Mammary epithelial cell (primary cell): ENCODE measurements at regions of chr6 and their contacts with region 1.

Region 1: DNA sequence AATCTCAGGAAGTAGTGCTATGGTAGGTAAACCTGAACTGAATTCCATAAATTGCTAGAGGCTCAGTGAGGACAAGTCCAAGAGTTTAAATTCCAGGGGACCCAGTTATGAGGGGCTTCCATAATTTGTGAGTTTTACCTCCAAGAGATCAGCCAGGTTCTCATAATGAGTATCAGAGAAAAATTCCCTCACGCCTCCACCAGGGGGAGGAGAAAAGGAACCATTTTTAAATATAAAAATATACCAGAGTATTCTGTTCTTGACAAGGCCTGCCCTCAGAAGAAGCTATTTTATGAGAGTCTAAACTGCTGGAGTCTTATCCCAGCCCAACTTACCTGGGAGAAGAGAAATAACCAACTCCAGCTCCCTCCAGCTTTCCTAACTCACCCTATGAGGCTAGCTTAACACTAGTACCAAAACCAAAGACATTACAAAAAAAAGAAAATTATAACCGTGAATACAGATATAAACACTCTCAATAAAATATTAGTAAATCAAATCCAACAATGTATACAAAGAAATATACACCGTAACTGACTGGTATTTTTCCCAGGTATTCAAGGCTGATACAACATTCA is 158.7 kb downstream of the TFAP2A start:
- DNase-seq: no peak
- H3K4me3 ChIP-seq: no peak overlapping the region
- H3K27ac ChIP-seq: no peak overlapping the region
- H3K4me1 ChIP-seq: no peaks in the 10 kb centered on the region
- H3K27me3 ChIP-seq: no peaks in the 10 kb centered on the region
- CTCF ChIP-seq: peak; percentile 35 to 37

Region 2: GRCh38 chr6:9623985-9624384 is 632.2 kb before region 1 on chr6:
- CTCF ChIA-PET with region 1: no interaction called
- dilution Hi-C with region 1: no loop called
- in situ Hi-C with region 1: no loop called
- intact Hi-C with region 1: no loop called
- DNase-seq: no peak
- H3K4me3 ChIP-seq: no peak overlapping the region
- H3K27ac ChIP-seq: no peak overlapping the region
- H3K4me1 ChIP-seq: peaks cover 3% of the 10 kb centered on the region
- H3K27me3 ChIP-seq: no peaks in the 10 kb centered on the region
- CTCF ChIP-seq: no peak

Region 3: DNA sequence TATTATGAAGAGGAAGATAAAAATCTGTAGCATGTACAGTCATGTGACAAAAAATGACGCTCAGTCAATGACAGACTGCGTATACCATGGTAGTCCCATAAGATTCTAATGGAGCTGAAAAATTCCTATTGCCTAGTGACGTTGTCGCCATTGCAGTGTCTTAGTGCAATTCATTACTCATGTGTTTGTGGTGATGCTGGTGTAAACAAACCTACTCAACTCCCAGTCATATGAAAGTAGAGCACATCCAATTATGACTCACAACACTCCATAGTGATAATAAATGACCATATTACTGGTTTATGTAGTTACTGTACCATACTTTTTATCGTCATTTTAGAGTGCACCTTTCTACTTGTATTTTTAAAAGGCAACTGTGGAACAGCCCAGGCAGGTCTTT is 113.7 kb after region 1 on chr6:
- CTCF ChIA-PET with region 1: no interaction called
- dilution Hi-C with region 1: loop called (anchors 10 kb)
- in situ Hi-C with region 1: no loop called
- intact Hi-C with region 1: no loop called
- DNase-seq: peak; percentile 79
- H3K4me3 ChIP-seq: no peak overlapping the region
- H3K27ac ChIP-seq: peak overlapping the region; percentile 19
- H3K4me1 ChIP-seq: peaks cover 6% of the 10 kb centered on the region
- H3K27me3 ChIP-seq: no peaks in the 10 kb centered on the region
- CTCF ChIP-seq: no peak